ENCODE measurements at regions of chr1 and their contacts with region 1.

Region 1: DNA sequence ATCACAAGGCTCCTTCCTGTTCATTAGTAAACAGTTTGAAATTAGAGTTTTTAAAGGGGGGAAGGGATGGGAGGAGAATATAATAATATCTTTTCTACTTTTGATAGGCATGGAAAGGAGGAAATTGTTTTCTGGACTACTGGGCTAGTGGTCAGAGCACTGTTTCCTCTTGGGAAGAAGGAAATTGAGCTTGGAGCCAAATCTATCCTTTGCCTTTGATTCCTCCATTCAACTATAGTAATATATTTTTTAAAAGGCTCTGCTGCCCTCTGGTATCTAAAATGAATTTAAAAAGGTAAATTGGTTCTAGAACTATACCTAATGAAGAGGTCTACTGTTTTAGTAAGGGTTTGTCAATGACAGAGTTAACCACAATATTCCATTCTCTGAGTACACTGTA is 5.9 kb downstream of the IARS2 start:
- DNase-seq: no peak
- ATAC-seq: no peak
- H3K4me3 ChIP-seq: no peak overlapping the region
- H3K27ac ChIP-seq: no peak overlapping the region
- H3K4me1 ChIP-seq: peaks cover 12% of the 10 kb centered on the region
- H3K27me3 ChIP-seq: no peaks in the 10 kb centered on the region
- CTCF ChIP-seq: no peak

Region 2: DNA sequence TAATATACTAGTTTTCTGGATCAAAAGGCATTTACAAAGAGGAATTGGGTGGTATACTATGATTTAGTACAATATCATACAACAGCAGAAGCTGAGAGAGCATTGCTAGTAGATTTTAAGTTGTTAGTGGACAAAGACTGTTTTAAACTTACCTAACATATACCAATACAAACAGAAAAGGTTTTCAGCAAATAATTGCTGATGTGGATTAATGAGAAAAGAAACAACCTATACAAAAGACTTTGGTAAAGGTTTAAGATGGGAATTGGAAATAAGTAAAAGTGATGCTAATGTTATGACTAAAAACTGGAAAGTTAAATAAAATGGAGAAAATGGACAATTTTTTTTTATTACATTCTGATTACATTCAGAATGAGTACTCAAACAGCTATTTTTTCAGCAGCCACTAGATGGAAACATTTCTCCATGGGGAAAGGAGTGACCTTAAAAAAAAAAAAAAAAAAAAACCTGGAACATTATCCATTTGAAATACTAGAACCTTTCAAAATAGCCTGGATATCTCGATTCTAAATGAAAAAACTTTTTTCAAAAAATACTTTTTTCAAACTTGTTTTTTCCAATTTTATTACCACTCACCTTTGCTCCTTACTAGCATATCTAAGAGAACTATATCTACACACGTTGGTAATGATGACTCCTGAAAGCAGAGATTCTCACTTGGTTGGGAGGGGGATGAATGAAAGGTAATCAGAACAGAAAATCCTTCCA is 108.9 kb before region 1 on chr1:
- intact Hi-C with region 1: loop called in 1 of 2 experiments (anchors 10 kb)
- DNase-seq: no peak
- ATAC-seq: peak in 1 of 4 donors; percentile 77
- H3K4me3 ChIP-seq: no peak overlapping the region
- H3K27ac ChIP-seq: no peak overlapping the region
- H3K4me1 ChIP-seq: peaks cover 3% of the 10 kb centered on the region
- H3K27me3 ChIP-seq: no peaks in the 10 kb centered on the region
- CTCF ChIP-seq: peak; percentile 58

Region 3: DNA sequence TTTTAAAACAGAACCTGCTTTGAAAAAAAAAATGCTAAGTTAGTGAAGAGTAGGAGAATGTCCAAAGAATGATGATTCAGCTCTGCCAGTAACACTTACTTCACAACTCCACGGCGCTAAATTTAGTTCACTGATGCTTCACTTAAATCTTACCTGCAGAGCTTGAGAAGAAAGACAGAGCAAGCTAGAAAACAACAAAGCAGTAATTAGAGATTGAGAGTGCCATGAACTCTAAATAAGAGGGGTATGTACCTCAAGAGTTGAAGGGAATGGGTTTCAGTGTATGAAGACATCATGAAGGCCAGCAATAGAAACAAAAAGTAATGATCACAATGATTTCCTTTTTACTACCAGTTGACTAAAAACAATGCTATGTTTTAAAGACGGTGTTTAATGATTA is 86.3 kb before region 1 on chr1:
- intact Hi-C with region 1: loop called in 1 of 2 experiments (anchors 10 kb)
- DNase-seq: no peak
- ATAC-seq: no peak
- H3K4me3 ChIP-seq: no peak overlapping the region
- H3K27ac ChIP-seq: no peak overlapping the region
- H3K4me1 ChIP-seq: no peaks in the 10 kb centered on the region
- H3K27me3 ChIP-seq: no peaks in the 10 kb centered on the region
- CTCF ChIP-seq: no peak